Gastrocnemius medialis (tissue), 4 donors: ENCODE measurements at regions of chr19 and their contacts with region 1.

Region 1: DNA sequence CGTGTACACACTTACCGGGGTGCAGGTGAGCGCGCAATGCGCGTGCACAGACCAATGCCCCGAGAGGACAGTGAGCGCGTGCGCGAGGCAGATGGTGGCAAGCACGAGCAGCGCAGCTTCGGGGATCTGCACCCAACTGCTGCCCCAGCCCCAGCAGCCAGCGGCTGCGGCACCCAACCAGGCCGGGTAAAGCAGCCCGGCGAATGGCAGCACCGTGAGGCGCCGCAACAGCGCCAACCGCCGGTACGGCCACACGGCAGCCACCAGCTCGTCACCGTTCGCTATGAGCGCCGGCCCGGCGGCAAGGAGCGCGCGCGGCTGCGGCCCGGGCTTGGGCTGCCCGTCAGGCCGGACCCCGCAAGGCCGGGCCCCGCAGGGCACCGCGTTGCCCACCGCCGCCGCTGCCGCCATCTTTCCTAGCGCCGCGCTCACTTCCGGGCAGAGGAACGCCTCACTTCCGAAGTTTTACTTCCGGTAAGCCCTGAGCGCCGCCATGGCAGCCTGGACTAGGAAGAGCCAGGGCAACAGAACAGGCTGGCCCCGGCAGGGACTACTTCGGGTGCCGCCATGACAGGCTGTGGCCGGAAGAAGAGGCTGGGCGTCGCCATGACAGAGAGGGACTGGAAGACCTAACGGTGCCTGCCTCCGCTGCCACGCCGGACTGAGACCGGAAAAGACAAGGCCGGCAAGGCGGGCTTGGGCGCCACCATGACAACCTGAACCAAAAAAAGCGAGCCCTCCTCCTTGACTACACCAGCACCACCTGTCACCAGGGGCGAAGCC is at the start of gene ATP13A1:
- DNase-seq: peak; percentile 95 to 96
- ATAC-seq: peak; percentile 93 to 98
- H3K4me3 ChIP-seq: peak within 1 kb of the TSS; percentile 77 to 96 (median 94)
- H3K27ac ChIP-seq: peak within 1 kb of the TSS; percentile 93 to 99 (median 96)
- H3K4me1 ChIP-seq: peaks cover 10 to 25% of the 10 kb centered on the region in 2 donors
- H3K27me3 ChIP-seq: no peaks in the 10 kb centered on the region
- CTCF ChIP-seq: peak in 1 of 5 experiments; percentile 44
- POLR2A ChIP-seq: peak; percentile 41 to 59
- total RNA-seq, gene ATP13A1: 51.8 to 111 (median 82.8) TPM

Region 2: GRCh38 chr19:19385108-19385899 is 278.1 kb before region 1 on chr19:
- in situ Hi-C with region 1: loop called in 1 of 4 experiments (anchors 25 kb)
- intact Hi-C with region 1: no loop called
- DNase-seq: peak; percentile 100
- ATAC-seq: peak; percentile 95 to 97
- H3K4me3 ChIP-seq: peak overlapping the region; percentile 73 to 96 (median 86)
- H3K27ac ChIP-seq: peak overlapping the region; percentile 81 to 93 (median 87)
- H3K4me1 ChIP-seq: peaks cover 37 to 47% of the 10 kb centered on the region in 2 donors
- H3K27me3 ChIP-seq: no peaks in the 10 kb centered on the region
- CTCF ChIP-seq: peak in 4 of 5 experiments; percentile 7 to 49 (median 34)
- POLR2A ChIP-seq: peak; percentile 46 to 49

Region 3: GRCh38 chr19:19578252-19578651 is 85.2 kb before region 1 on chr19:
- in situ Hi-C with region 1: no loop called
- intact Hi-C with region 1: no loop called
- DNase-seq: no peak
- ATAC-seq: no peak
- H3K4me3 ChIP-seq: no peak overlapping the region
- H3K27ac ChIP-seq: no peak overlapping the region
- H3K4me1 ChIP-seq: no peaks in the 10 kb centered on the region
- H3K27me3 ChIP-seq: no peaks in the 10 kb centered on the region
- CTCF ChIP-seq: no peak
- POLR2A ChIP-seq: no peak

Region 4: GRCh38 chr19:19627621-19628500 is 35.6 kb before region 1 on chr19 and contains the start of gene LPAR2:
- in situ Hi-C with region 1: no loop called
- intact Hi-C with region 1: no loop called
- DNase-seq: no peak
- ATAC-seq: no peak
- H3K4me3 ChIP-seq: peak within 1 kb of the TSS; percentile 13 to 40 (median 36)
- H3K27ac ChIP-seq: no peak within 1 kb of the TSS
- H3K4me1 ChIP-seq: no peaks in the 10 kb centered on the region
- H3K27me3 ChIP-seq: peaks cover 15 to 29% (median 24%) of the 10 kb centered on the region in 3 donors
- CTCF ChIP-seq: no peak
- POLR2A ChIP-seq: no peak
- total RNA-seq, gene LPAR2: 0.15 to 1.3 (median 0.27) TPM in 3 of 4 donors, not detected in the other

Region 5: GRCh38 chr19:19686580-19686979 is 23.1 kb after region 1 on chr19:
- in situ Hi-C with region 1: no loop called
- intact Hi-C with region 1: no loop called
- DNase-seq: no peak
- ATAC-seq: no peak
- H3K4me3 ChIP-seq: no peak overlapping the region
- H3K27ac ChIP-seq: no peak overlapping the region
- H3K4me1 ChIP-seq: no peaks in the 10 kb centered on the region
- H3K27me3 ChIP-seq: no peaks in the 10 kb centered on the region
- CTCF ChIP-seq: no peak
- POLR2A ChIP-seq: no peak

Region 6: DNA sequence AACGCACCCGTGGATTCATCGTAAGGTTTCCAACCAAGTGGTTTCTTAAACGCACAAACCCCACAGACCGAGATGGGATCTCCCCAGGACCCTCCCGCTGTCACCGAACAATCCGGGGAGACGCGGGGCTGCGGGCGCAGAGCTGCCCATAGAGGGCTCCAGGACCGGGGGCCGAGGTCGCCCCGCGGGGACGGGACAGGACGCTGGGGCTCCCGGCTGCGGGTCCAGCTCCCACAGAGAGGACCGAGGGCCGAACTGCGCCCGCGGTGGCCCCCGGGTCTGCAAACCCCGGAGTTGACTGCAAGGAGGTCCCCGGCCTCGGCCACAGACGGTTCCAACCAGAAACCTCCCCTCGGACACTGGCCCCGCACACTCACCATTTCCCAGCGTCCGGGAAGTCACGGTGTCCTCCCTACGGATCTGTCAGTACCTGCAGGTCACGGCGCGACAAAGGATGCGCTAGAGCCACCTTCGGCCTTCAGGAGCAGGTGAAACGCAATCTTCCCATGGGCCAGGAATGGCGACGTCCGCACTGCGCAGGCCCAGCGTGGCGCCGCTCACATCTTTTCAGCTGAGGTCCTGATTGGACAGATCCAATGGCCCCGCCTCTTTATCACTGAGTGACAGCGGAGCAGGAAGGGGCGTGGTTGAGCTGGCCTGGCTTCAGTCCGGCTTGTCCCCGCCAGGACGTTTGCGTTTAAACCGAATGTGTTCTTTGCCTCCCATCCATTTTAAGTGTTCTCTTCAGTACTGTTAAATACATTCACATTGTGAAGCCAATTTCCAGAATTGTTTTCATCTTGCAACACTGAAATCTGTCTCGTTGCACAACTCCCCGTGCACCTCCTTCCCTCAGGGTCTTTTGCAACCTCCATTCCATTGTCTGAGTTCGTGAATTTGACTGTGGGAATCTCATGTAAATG is 69.4 kb after region 1 on chr19 and contains the start of gene ZNF14:
- in situ Hi-C with region 1: no loop called
- intact Hi-C with region 1: loop called (anchors 5 kb)
- DNase-seq: peak; percentile 81 to 87
- ATAC-seq: peak; percentile 99 to 100
- H3K4me3 ChIP-seq: peak within 1 kb of the TSS; percentile 75 to 99 (median 82)
- H3K27ac ChIP-seq: peak within 1 kb of the TSS; percentile 43 to 72 (median 60)
- H3K4me1 ChIP-seq: peaks cover 0 to 4% of the 10 kb centered on the region in 2 donors
- H3K27me3 ChIP-seq: no peaks in the 10 kb centered on the region
- CTCF ChIP-seq: no peak
- POLR2A ChIP-seq: peak; percentile 45 to 62
- total RNA-seq, gene ZNF14: 0.97 to 2.1 (median 1.7) TPM

Region 7: GRCh38 chr19:19821366-19821951 is 158.0 kb after region 1 on chr19 and contains the start of gene ZNF506:
- in situ Hi-C with region 1: no loop called
- intact Hi-C with region 1: loop called (anchors 5 kb)
- DNase-seq: peak; percentile 98
- ATAC-seq: peak; percentile 99
- H3K4me3 ChIP-seq: peak within 1 kb of the TSS; percentile 66 to 87 (median 77)
- H3K27ac ChIP-seq: peak within 1 kb of the TSS; percentile 90 to 93 (median 92)
- H3K4me1 ChIP-seq: peaks cover 3 to 10% of the 10 kb centered on the region in 2 donors
- H3K27me3 ChIP-seq: no peaks in the 10 kb centered on the region
- CTCF ChIP-seq: no peak
- POLR2A ChIP-seq: peak; percentile 66 to 83
- total RNA-seq, gene ZNF506: 6.3 to 18.7 (median 14.9) TPM